Activated CD4-positive, alpha-beta T cell treated with anti-CD3 and anti-CD28 coated beads for 36 hours (primary cell): ENCODE measurements at regions of chr7 and their contacts with region 1.

Region 1: GRCh38 chr7:127392566-127393367 is at the start of gene ZNF800:
- DNase-seq: peak; percentile 93
- ATAC-seq: peak; percentile 81
- H3K4me3 Mint-ChIP-seq: peak within 1 kb of the TSS; percentile 87
- H3K27ac Mint-ChIP-seq: peak within 1 kb of the TSS; percentile 96
- H3K4me1 Mint-ChIP-seq: peaks cover 62% of the 10 kb centered on the region
- H3K27me3 Mint-ChIP-seq: no peaks in the 10 kb centered on the region
- total RNA-seq, gene ZNF800: 27.5 to 34.7 TPM

Region 2: GRCh38 chr7:127347567-127348246 is 45.1 kb before region 1 on chr7:
- CTCF ChIA-PET with region 1: interaction called, 4 read pairs
- POLR2A ChIA-PET with region 1: interaction called, 6 read pairs
- intact Hi-C with region 1: loop called (anchors 1 to 5 kb)
- DNase-seq: peak; percentile 87
- ATAC-seq: peak; percentile 98
- H3K4me3 Mint-ChIP-seq: peak overlapping the region; percentile 37
- H3K27ac Mint-ChIP-seq: no peak overlapping the region
- H3K4me1 Mint-ChIP-seq: peaks cover 21% of the 10 kb centered on the region
- H3K27me3 Mint-ChIP-seq: peaks cover 5% of the 10 kb centered on the region

Region 3: GRCh38 chr7:127447326-127447945 is 54.7 kb after region 1 on chr7:
- CTCF ChIA-PET with region 1: interaction called, 3 read pairs
- POLR2A ChIA-PET with region 1: no interaction called
- intact Hi-C with region 1: loop called in 1 of 2 experiments (anchors 5 kb)
- DNase-seq: peak; percentile 63
- ATAC-seq: peak; percentile 98
- H3K4me3 Mint-ChIP-seq: no peak overlapping the region
- H3K27ac Mint-ChIP-seq: no peak overlapping the region
- H3K4me1 Mint-ChIP-seq: peaks cover 17% of the 10 kb centered on the region
- H3K27me3 Mint-ChIP-seq: peaks cover 5% of the 10 kb centered on the region

Region 4: DNA sequence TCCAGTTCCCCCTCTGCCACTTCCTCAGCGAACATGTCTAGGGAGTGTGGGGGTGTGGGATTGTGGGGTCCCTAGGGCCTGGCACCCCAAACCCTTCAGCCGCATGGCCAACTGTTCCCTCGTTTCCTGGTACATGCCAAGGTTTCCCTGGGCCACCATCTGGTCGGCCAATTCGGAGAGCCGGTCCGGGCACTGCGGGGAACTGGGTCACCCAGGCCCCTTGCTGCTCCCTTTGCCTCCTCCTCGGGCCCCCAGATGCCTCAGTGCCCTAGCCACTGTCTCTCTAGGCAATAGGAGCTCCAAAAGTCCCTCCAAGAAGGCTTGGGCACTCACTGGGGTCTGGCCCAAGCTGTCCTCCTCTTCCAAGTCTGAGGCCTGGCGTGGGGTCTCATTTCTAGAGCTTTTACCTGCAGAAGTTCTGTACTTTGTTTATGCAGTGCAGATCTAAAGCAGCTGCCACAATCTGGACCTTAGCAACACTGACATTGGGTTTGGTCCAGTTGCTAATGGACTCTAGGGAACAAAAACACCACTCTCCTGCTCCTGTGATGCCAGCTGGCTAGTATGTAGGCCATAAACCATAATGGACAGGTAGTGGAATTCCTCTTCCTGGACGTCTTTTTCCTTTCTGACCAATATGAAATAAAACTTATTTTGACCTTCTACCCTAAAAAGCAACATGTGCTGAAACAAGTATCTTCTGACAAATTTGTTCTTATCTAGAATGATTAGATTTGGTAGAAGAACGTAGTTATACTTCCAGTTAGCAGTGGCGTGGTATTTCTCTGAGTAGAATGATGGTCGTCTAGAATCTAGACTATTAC is 465.5 kb after region 1 on chr7:
- CTCF ChIA-PET with region 1: no interaction called
- POLR2A ChIA-PET with region 1: no interaction called
- intact Hi-C with region 1: loop called (anchors 5 to 10 kb)
- DNase-seq: no peak
- ATAC-seq: no peak
- H3K4me3 Mint-ChIP-seq: no peak overlapping the region
- H3K27ac Mint-ChIP-seq: no peak overlapping the region
- H3K4me1 Mint-ChIP-seq: peaks cover 58% of the 10 kb centered on the region
- H3K27me3 Mint-ChIP-seq: no peaks in the 10 kb centered on the region